Aorta (tissue), 5 donors: ENCODE measurements at regions of chr6 and their contacts with region 1.

Region 1: GRCh38 chr6:31739639-31740396 is at the start of gene MSH5:
- DNase-seq: peak; percentile 99
- ATAC-seq: peak; percentile 95
- H3K4me3 ChIP-seq: peak within 1 kb of the TSS; percentile 44 to 54
- H3K27ac ChIP-seq: no peak within 1 kb of the TSS
- H3K4me1 ChIP-seq: no peaks in the 10 kb centered on the region
- H3K27me3 ChIP-seq: no peaks in the 10 kb centered on the region
- total RNA-seq, gene MSH5: 5.9 to 15.1 TPM

Region 2: GRCh38 chr6:31689249-31690110 is 50.3 kb before region 1 on chr6:
- intact Hi-C with region 1: no loop called
- DNase-seq: no peak
- ATAC-seq: no peak
- H3K4me3 ChIP-seq: no peak overlapping the region
- H3K27ac ChIP-seq: no peak overlapping the region
- H3K4me1 ChIP-seq: no peaks in the 10 kb centered on the region
- H3K27me3 ChIP-seq: no peaks in the 10 kb centered on the region

Region 3: GRCh38 chr6:31795616-31796298 is 55.9 kb after region 1 on chr6 and contains the start of gene VARS1:
- intact Hi-C with region 1: loop called (anchors 5 kb)
- DNase-seq: peak; percentile 96 to 97
- ATAC-seq: peak; percentile 94
- H3K4me3 ChIP-seq: peak within 1 kb of the TSS; percentile 43 to 78
- H3K27ac ChIP-seq: peak within 1 kb of the TSS; percentile 33 to 62
- H3K4me1 ChIP-seq: no peaks in the 10 kb centered on the region
- H3K27me3 ChIP-seq: no peaks in the 10 kb centered on the region
- total RNA-seq, gene VARS1: 44.4 to 49.6 TPM

Region 4: GRCh38 chr6:31827286-31828079 is 87.7 kb after region 1 on chr6 and contains the start of gene HSPA1B:
- intact Hi-C with region 1: loop called in 1 of 2 experiments (anchors 1 kb)
- DNase-seq: peak; percentile 99
- ATAC-seq: peak; percentile 94
- H3K4me3 ChIP-seq: peak within 1 kb of the TSS; percentile 42 to 57
- H3K27ac ChIP-seq: peak within 1 kb of the TSS; percentile 98 to 99
- H3K4me1 ChIP-seq: peaks cover 0 to 3% of the 10 kb centered on the region in 2 donors
- H3K27me3 ChIP-seq: peaks cover 0 to 2% of the 10 kb centered on the region in 2 donors
- total RNA-seq, gene HSPA1B: 155 to 332 TPM

Region 5: DNA sequence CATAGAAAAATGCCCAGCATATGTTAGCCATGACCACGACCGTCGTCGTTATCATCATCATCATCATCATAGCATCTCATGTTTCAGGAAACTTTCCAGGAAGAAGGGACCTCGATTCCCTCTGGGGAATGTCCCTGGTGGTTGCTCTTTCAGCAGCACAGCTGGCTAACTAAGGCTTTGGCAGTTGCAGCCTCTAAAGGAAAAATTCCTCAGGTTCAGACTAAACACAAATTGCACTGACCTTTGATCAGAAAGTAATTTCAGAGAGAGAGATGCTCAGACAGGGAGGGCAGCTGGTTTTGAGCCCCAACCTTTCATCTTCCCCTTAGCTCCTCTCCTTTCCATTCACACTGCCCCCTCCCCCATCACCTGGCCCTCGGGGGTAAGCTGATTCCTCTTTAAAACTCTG is 200.4 kb after region 1 on chr6:
- intact Hi-C with region 1: no loop called
- DNase-seq: peak in 1 of 2 donors; percentile 2
- ATAC-seq: no peak
- H3K4me3 ChIP-seq: no peak overlapping the region
- H3K27ac ChIP-seq: no peak overlapping the region
- H3K4me1 ChIP-seq: no peaks in the 10 kb centered on the region
- H3K27me3 ChIP-seq: no peaks in the 10 kb centered on the region